OCI-LY7 (cell line): ENCODE measurements at regions of chr7 and their contacts with region 1.

Region 1: DNA sequence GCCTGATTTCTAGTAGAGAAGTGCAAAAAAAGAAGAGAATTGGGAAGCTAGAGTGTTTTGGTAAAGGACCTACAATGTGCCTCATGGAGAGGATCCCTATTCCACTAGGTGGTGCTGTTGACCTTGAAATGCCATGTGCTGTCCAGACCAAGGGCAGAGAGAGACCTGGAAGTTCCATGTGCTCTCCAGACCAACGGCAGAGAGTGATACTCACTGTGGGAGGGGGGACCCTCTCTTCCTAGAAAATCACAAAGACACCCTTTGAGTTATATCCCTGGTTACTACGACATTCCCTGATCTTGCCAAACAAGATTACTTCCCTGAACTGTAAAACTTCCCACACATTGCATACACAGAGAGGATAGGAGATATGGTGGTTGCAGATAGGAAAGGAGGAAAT is 212.7 kb upstream of the ZNF804B start:
- DNase-seq: peak; percentile 44
- H3K4me3 ChIP-seq: no peak overlapping the region
- H3K27ac ChIP-seq: no peak overlapping the region
- H3K4me1 ChIP-seq: no peaks in the 10 kb centered on the region
- CTCF ChIP-seq: peak; percentile 79

Region 2: DNA sequence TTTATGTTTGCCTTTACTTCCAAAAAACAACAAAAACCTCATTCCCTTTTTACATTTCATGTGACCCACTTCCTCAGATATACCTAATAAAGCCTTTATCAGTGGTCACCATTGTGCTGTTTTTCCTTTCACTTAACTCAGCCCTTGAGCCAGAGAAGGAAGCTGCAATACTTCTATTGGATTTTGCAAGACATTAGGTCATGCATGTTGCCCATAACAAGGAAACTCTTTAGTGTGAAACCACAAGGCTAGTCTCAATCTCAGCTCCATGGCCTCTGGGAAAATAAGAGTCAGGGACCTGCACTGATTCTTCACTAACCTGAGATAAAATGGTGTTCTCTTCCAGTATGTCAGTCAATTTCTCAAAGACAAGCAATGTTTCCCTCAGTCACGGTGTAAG is 267.9 kb before region 1 on chr7:
- CTCF ChIA-PET with region 1: no interaction called
- POLR2A ChIA-PET with region 1: no interaction called
- intact Hi-C with region 1: no loop called
- DNase-seq: no peak
- H3K4me3 ChIP-seq: no peak overlapping the region
- H3K27ac ChIP-seq: no peak overlapping the region
- H3K4me1 ChIP-seq: no peaks in the 10 kb centered on the region
- CTCF ChIP-seq: no peak

Region 3: GRCh38 chr7:88835147-88835728 is 288.4 kb after region 1 on chr7:
- CTCF ChIA-PET with region 1: no interaction called
- POLR2A ChIA-PET with region 1: no interaction called
- intact Hi-C with region 1: loop called (anchors 5 kb)
- DNase-seq: peak; percentile 33
- H3K4me3 ChIP-seq: no peak overlapping the region
- H3K27ac ChIP-seq: no peak overlapping the region
- H3K4me1 ChIP-seq: no peaks in the 10 kb centered on the region
- CTCF ChIP-seq: peak; percentile 73

Region 4: DNA sequence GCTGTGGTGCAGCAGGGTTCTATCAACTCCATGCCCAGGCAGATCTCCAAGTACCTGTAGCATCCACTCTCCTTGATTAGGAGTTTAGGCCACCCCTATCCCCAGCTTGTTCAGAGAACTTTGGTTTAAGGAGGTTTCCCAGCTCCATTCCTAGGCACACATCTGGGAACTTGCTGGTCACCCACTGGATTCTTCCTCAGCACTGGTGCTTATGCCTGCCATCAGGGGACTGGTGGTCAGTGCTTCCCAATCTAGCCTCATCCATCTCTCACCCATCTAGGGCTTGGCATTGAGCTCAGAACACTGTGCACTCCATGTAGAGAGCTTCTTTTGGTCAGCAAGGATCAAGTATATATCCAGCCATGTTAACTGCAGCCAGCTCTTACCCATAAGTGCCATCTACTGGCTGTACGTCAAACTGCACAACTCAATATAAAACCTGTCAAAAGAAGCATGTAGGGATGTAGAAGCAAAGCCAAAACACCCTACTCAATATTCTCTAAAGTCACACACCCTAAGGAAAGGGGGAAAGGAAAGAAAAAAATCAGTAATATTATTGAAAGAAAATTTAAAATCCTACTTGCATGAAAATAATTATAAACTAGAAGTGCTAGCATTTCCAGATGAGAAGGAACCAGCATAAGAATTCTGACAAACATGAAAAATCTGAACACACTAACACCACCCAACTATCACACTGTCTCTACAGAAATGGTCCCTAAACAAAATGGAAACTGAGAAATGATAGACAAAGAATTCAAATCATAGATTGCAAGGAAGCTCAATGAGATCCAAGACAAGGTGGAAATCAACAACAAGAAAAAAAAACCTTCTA is 1076.2 kb after region 1 on chr7:
- CTCF ChIA-PET with region 1: no interaction called
- POLR2A ChIA-PET with region 1: no interaction called
- intact Hi-C with region 1: loop called (anchors 2 kb)
- DNase-seq: peak; percentile 29
- H3K4me3 ChIP-seq: no peak overlapping the region
- H3K27ac ChIP-seq: no peak overlapping the region
- H3K4me1 ChIP-seq: no peaks in the 10 kb centered on the region
- CTCF ChIP-seq: peak; percentile 83